Heart left ventricle (tissue), 16 donors: ENCODE measurements at regions of chr15 and their contacts with region 1.

Region 1: DNA sequence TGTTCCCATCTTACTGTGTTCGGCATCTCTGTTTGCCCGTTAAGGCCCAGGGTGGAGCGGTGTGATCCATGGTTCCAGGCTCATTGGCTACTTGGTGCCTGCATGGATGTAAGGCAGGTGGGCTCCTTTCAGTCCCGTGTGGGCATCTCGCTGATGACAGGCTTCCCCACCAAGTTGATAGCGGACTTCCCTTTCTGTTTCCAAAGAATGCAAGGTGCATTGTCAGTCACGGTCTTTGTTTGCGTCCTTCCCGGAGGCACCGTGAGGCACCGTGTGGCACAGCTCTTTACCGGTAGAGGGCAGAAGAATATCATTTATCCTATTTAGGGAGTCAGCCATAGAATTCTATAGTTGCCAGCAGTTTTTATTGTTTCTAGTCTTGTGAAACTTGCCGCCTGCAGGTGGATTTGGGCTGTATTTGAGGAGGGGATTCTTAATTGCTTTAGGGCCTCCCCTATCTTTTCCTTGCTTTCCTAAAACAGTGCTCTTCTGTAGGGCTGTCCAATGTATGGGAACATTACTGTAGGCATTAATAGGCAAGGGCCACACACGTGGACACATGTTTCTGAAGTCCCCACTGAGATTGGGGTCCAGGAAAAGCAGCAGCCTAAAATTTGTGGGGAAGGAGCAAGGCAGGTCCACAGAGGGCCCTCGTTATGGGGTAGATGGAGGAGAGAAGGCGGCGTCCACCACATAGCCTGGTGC is 244.1 kb downstream of the SLCO3A1 start:
- DNase-seq: no peak
- ATAC-seq: peak; percentile 45 to 87 (median 76)
- H3K4me3 ChIP-seq: no peak overlapping the region
- H3K27ac ChIP-seq: peak overlapping the region in 1 of 12 donors; percentile 8
- H3K4me1 ChIP-seq: peaks cover 0 to 51% (median 12%) of the 10 kb centered on the region in 12 donors
- H3K27me3 ChIP-seq: no peaks in the 10 kb centered on the region
- CTCF ChIP-seq: peak; percentile 48 to 83 (median 66)
- POLR2A ChIP-seq: no peak

Region 2: DNA sequence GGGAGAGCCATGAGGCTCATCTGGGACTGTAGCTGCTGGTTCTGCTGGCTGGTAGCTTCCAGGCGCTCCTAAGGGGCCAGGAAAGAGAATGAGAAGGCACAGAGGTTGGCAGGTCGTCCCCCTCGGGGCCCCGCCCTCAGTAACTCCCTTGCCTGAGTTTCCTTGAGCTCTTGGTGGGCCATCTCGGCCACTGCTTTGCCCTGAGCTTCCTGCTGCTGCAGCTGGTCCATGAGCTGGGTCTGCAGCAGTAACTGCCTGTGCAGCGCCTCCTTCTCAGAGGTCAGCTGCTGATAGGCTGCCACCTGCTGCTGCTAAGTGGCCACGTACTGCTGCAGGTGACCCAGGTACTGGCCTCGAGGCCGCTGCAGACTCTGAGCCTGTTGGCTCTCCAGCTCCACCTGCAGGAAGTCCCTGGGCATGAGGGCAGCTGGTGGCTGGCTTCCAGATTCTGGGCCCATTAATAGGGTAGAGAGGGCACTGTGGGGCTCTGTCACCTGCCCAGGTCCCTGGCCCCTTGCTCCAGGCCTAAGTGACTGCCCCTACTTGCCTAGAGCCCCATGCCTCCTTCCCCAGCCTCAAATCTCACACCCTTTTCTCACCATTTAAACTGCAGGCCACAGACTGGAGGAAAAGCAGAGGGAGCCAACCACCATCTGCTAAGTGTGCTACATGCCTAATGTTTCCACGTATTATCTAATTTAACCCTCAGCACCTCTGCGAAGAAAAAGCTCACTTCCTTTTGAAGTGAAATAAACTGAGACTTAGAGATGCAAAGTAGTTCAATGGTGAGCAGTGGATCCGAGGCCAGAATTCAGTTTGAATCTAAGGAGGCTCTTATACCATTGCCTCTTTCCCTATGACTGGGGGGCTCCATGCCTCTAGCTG is 1064.5 kb before region 1 on chr15:
- intact Hi-C with region 1: loop called in 1 of 10 experiments (anchors 10 kb)
- DNase-seq: peak; percentile 29 to 66 (median 48)
- ATAC-seq: peak in 1 of 4 donors; percentile 60
- H3K4me3 ChIP-seq: no peak overlapping the region
- H3K27ac ChIP-seq: no peak overlapping the region
- H3K4me1 ChIP-seq: no peaks in the 10 kb centered on the region
- H3K27me3 ChIP-seq: peaks cover 0 to 8% (median 0%) of the 10 kb centered on the region in 9 donors
- CTCF ChIP-seq: peak; percentile 30 to 68 (median 52)
- POLR2A ChIP-seq: no peak

Region 3: DNA sequence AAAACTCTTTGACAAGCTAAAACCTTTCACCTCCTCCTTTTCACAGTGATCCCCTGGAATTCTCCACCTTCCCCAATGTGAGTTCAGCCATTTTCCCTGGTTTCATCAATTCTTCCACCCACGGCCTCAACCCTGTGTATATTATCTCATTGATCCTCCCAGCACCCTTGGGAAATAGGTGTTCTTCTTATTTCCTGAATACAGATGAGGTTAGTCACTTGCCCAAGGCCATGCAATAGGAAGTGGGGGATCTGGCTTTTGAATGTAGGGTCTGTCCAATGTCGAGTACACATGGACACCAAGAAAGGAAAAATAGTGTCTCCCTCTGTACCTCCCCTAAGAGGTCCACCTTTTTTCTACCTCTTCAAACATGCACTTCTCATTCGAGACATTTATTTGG is 33.3 kb after region 1 on chr15:
- intact Hi-C with region 1: no loop called
- DNase-seq: no peak
- ATAC-seq: no peak
- H3K4me3 ChIP-seq: no peak overlapping the region
- H3K27ac ChIP-seq: no peak overlapping the region
- H3K4me1 ChIP-seq: peaks cover 0 to 5% (median 0%) of the 10 kb centered on the region in 12 donors
- H3K27me3 ChIP-seq: no peaks in the 10 kb centered on the region
- CTCF ChIP-seq: no peak
- POLR2A ChIP-seq: no peak

Region 4: GRCh38 chr15:92205255-92205739 is 107.7 kb after region 1 on chr15:
- intact Hi-C with region 1: loop called in 9 of 10 experiments (anchors 1 to 5 kb)
- DNase-seq: peak in 3 of 5 donors; percentile 25 to 34 (median 28)
- ATAC-seq: peak; percentile 49 to 83 (median 71)
- H3K4me3 ChIP-seq: no peak overlapping the region
- H3K27ac ChIP-seq: peak overlapping the region in 4 of 12 donors; percentile 8 to 46 (median 18)
- H3K4me1 ChIP-seq: peaks cover 0 to 9% (median 0%) of the 10 kb centered on the region in 12 donors
- H3K27me3 ChIP-seq: no peaks in the 10 kb centered on the region
- CTCF ChIP-seq: peak in 11 of 12 donors; percentile 9 to 51 (median 34)
- POLR2A ChIP-seq: no peak

Region 5: GRCh38 chr15:92383519-92384326 is 286.1 kb after region 1 on chr15:
- intact Hi-C with region 1: loop called in 7 of 10 experiments (anchors 5 to 10 kb)
- DNase-seq: peak in 1 of 5 donors; percentile 40
- ATAC-seq: peak in 1 of 4 donors; percentile 41
- H3K4me3 ChIP-seq: no peak overlapping the region
- H3K27ac ChIP-seq: no peak overlapping the region
- H3K4me1 ChIP-seq: no peaks in the 10 kb centered on the region
- H3K27me3 ChIP-seq: peaks cover 0 to 16% (median 2%) of the 10 kb centered on the region in 9 donors
- CTCF ChIP-seq: peak; percentile 34 to 68 (median 56)
- POLR2A ChIP-seq: no peak

Region 6: DNA sequence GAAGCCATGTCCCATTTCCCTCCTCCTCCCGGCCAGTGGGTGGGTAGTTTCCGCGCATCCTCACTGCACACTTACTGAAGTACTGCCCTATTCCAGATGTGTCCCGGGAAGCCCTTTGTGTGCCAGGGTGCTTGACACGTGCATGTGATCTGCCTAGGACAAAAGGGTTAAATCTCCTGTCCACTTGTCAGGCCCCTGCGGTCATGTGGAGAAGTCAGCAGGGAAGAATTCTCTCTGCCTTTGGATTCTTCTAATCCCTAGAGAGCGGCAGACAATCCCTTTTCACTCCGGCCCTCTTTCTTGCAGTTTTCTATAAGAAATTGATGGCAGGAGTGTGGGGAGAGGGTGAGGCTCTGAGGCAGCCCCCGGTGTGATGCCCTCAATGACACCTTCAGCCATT is 315.9 kb after region 1 on chr15:
- intact Hi-C with region 1: loop called in 1 of 10 experiments (anchors 10 kb)
- DNase-seq: no peak
- ATAC-seq: no peak
- H3K4me3 ChIP-seq: no peak overlapping the region
- H3K27ac ChIP-seq: no peak overlapping the region
- H3K4me1 ChIP-seq: peaks cover 0 to 17% (median 3%) of the 10 kb centered on the region in 12 donors
- H3K27me3 ChIP-seq: peaks cover 0 to 6% (median 0%) of the 10 kb centered on the region in 9 donors
- CTCF ChIP-seq: no peak
- POLR2A ChIP-seq: no peak

Region 7: DNA sequence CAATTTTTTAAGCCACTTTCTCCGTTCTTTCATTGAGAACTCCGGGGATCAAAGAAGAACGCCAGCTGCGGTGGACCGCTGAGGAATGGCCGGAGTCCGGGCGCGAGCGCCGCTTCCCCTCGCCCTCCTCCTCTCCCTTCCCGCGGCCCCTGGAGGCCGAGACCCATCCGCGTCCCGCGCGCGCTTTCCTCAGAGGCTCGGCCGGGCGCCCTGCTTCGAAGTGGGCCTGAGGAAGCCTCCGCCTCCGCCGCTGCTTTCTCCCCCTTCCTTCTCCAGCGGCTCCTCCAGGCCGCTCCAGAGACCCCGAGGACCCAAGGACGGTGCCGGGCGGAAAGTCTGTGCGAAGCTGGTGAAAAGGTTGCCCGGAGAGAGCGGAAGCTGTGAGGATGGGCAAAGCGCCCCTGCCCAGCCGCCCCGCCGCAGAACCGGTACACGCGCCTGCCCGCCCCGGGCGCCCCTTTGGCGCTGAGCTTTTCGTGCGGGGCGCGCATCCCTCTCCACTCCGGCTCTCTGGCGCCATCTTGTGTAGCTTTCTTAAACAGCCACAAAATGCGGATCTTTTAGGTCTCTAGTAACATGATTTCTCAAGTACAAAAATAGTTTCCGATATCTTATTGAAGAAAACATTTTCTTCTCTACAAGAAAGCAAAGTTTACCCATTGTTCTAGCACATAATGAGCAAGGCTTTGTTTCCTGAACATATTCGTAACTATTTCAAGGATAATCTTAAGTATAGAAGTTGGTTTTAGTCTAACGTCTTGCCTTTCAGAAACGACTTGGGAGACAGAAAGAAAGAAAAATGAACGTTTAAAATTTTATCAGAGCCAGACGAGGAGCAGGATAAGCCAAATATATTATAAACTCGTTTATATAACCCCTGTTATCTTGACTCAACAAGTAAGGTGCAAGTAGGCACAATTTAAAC is 617.1 kb after region 1 on chr15:
- intact Hi-C with region 1: loop called in 6 of 10 experiments (anchors 10 kb)
- DNase-seq: peak; percentile 69 to 78 (median 75)
- ATAC-seq: peak; percentile 73 to 92 (median 88)
- H3K4me3 ChIP-seq: peak overlapping the region; percentile 33 to 74 (median 62)
- H3K27ac ChIP-seq: peak overlapping the region; percentile 17 to 86 (median 59)
- H3K4me1 ChIP-seq: peaks cover 0 to 9% (median 4%) of the 10 kb centered on the region in 12 donors
- H3K27me3 ChIP-seq: peaks cover 0 to 5% (median 0%) of the 10 kb centered on the region in 9 donors
- CTCF ChIP-seq: peak; percentile 78 to 97 (median 90)
- POLR2A ChIP-seq: no peak